AG04450 (cell line): ENCODE measurements at regions of chr1 and their contacts with region 1.

Region 1: GRCh38 chr1:21157868-21158267 is 18.8 kb downstream of the EIF4G3 start:
- DNase-seq: no peak
- H3K4me3 ChIP-seq: no peak overlapping the region
- H3K27ac ChIP-seq: no peak overlapping the region
- H3K27me3 ChIP-seq: no peaks in the 10 kb centered on the region
- CTCF ChIP-seq: no peak

Region 2: GRCh38 chr1:20932437-20932977 is 225.4 kb before region 1 on chr1:
- CTCF ChIA-PET with region 1: no interaction called
- POLR2A ChIA-PET with region 1: no interaction called
- DNase-seq: no peak
- H3K4me3 ChIP-seq: no peak overlapping the region
- H3K27ac ChIP-seq: no peak overlapping the region
- H3K27me3 ChIP-seq: no peaks in the 10 kb centered on the region
- CTCF ChIP-seq: no peak

Region 3: GRCh38 chr1:21090463-21090862 is 67.4 kb before region 1 on chr1:
- CTCF ChIA-PET with region 1: no interaction called
- POLR2A ChIA-PET with region 1: no interaction called
- DNase-seq: no peak
- H3K4me3 ChIP-seq: no peak overlapping the region
- H3K27ac ChIP-seq: no peak overlapping the region
- H3K27me3 ChIP-seq: no peaks in the 10 kb centered on the region
- CTCF ChIP-seq: no peak

Region 4: GRCh38 chr1:21176586-21177555 is 19.0 kb after region 1 on chr1 and contains the start of gene EIF4G3:
- CTCF ChIA-PET with region 1: interaction called, 10 read pairs
- POLR2A ChIA-PET with region 1: no interaction called
- DNase-seq: peak; percentile 93
- H3K4me3 ChIP-seq: peak within 1 kb of the TSS; percentile 89
- H3K27ac ChIP-seq: peak within 1 kb of the TSS; percentile 88
- H3K27me3 ChIP-seq: no peaks in the 10 kb centered on the region
- CTCF ChIP-seq: no peak
- polyA plus RNA-seq, gene EIF4G3: 66.6 and 74.9 TPM in 2 replicates

Region 5: GRCh38 chr1:21344750-21345443 is 187.0 kb after region 1 on chr1:
- CTCF ChIA-PET with region 1: no interaction called
- POLR2A ChIA-PET with region 1: no interaction called
- DNase-seq: no peak
- H3K4me3 ChIP-seq: peak overlapping the region; percentile 86
- H3K27ac ChIP-seq: no peak overlapping the region
- H3K27me3 ChIP-seq: no peaks in the 10 kb centered on the region
- CTCF ChIP-seq: no peak

Region 6: DNA sequence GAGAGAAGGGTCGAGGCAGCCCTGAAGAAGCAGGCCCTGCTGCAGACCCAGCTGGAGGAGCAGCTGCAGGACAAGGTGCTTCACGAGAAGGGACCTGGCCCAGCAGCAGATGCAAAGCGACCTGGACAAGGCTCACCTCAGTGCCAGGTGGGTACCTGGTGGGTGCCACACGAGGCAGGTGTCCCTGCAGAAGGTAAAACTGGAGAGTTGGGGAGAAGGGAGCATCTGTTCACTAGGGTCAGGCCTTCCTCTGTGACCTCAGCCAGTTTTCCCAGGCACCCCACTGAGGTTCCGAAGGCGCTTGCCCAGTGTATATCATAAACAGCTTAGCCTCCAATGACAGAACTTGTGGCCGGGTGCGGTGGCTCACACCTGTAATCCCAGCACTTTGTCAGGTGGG is 276.5 kb after region 1 on chr1:
- CTCF ChIA-PET with region 1: no interaction called
- POLR2A ChIA-PET with region 1: no interaction called
- DNase-seq: no peak
- H3K4me3 ChIP-seq: no peak overlapping the region
- H3K27ac ChIP-seq: no peak overlapping the region
- H3K27me3 ChIP-seq: no peaks in the 10 kb centered on the region
- CTCF ChIP-seq: no peak